Activated CD8-positive, alpha-beta memory T cell treated with anti-CD3 and anti-CD28 coated beads, Interleukin-2, amount 10 ng/mL, durations not matched to agents 7 days and 5 days (primary cell): ENCODE measurements at regions of chrX and their contacts with region 1.

Region 1: DNA sequence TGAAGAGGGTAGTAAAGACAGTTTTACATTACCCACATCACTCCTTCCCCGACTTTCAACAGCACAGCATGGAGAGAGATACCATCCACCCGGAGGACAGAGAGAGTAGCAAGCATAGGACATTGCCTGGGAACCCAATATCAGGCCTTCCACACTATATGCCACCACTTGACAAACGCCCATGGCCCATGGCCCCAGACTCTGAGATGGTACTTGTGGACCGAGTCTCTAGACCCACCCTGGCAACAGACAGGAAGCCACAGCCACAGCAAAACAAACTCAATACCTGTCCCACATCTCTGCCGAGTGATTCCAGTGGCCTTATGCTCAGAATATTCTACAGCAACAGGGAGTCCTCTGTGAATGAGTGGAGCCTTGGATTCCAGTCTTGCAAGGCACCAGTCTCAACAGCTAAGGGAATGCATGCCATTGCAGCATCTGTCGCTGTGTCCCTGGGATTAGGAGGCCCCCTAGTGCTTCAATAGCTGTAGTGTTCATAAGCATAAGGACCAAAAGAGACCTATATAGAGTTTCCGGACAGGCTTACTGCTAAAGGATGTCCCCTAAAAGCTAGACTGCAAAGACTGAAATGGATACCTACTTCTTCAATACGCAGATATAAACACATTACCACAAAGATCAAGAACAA is 14.7 kb upstream of the CT55 start:
- DNase-seq: peak; percentile 45
- ATAC-seq: peak; percentile 76
- H3K4me3 Mint-ChIP-seq: no peak overlapping the region
- H3K27ac Mint-ChIP-seq: no peak overlapping the region
- H3K4me1 Mint-ChIP-seq: peaks cover 7% of the 10 kb centered on the region
- H3K27me3 Mint-ChIP-seq: peaks cover 68% of the 10 kb centered on the region

Region 2: DNA sequence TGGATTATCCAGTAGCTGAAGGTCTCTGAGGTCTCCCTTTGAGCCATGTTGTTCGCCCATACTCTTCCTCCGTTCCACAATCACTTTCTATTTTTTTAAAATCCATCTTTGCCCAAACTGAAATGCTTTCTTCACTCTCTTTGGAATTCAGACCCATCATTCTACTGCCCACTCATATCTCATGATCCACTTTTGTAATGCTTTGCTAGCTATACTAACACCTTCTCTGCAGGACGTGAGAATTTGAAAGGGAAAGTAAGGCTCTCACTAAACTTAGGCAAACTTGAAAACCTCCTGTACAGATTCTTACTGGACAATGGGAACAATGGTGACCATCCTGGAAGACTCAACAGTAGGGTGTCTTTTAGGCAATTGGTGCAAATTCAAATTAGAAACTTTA is 125.2 kb before region 1 on chrX:
- CTCF ChIA-PET with region 1: no interaction called
- DNase-seq: no peak
- ATAC-seq: no peak
- H3K4me3 Mint-ChIP-seq: no peak overlapping the region
- H3K27ac Mint-ChIP-seq: no peak overlapping the region
- H3K4me1 Mint-ChIP-seq: no peaks in the 10 kb centered on the region
- H3K27me3 Mint-ChIP-seq: peaks cover 3% of the 10 kb centered on the region

Region 3: DNA sequence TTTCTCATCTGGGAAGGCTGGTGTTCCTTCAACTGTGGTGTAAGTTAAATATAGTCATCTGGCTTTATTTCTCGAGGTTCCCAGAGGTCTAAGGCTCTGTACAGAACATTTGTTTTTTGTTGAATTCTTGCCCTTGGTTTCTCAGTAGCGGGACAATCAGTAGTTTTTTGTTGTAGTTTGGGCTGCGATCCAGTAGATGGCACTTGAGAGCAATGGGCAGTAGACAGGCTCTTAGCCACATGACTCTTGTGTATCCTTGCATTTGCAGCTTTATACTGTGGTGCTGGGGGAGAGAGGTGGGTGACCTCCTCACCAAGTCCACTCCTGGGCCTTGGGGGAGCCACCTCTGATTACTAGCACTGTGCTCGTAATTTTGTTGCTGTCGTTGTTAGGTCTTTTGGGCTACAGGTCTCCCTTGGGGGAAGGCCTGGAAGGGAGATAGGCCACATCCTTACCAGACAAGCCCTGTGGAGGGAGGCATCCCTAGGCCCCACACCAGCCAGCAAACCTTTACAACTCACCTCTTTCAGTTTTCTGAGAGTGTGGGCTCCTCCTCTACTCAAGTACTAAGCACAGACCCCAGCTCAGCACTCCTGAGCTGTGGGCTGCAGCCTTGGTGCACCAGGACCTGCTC is 73.7 kb before region 1 on chrX:
- CTCF ChIA-PET with region 1: interaction called, 13 read pairs
- DNase-seq: peak; percentile 56
- ATAC-seq: peak; percentile 33
- H3K4me3 Mint-ChIP-seq: no peak overlapping the region
- H3K27ac Mint-ChIP-seq: no peak overlapping the region
- H3K4me1 Mint-ChIP-seq: no peaks in the 10 kb centered on the region
- H3K27me3 Mint-ChIP-seq: peaks cover 21% of the 10 kb centered on the region